ENCODE measurements at regions of chr11 and their contacts with region 1.

Region 1: DNA sequence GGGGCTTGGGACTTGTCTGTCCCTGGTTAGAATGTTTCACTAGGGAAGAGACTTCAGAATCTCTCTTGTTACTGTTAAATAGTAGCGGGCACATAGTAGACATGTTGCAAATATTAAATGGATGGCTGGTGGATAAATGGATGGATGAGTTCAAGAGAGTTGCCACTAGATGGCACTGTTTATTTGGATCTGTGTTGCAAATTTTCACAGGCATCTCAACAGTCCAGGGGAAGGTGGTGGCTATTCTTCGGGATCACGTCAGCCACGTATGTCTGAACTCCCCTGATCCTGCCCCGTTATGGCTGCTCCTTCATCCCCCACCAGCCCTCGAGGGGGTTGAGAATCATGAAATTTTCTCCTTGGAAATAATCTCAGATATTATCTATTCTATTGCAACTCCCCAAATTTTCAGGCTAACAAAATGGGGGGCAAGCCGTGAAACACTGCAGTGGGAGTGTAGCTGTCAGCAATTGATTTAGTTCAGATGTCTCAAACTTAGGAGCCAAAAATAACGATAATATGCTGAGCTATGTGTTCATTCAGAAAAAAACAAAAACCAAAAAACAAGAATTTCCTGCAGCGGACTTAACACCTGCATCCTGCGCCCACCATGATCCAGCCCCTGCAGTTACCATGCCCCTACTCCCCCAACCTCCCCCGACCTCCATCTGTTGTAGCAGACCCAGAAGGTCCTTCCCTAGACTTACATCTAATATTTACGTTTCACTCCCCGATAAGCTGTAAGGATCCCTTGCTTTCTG is 29.1 kb upstream of the BIRC3 start:
- DNase-seq: peak; percentile 76 to 82 (median 82)
- H3K4me3 ChIP-seq: peak overlapping the region in 6 of 7 experiments; percentile 7 to 79 (median 46)
- H3K27ac ChIP-seq: no peak overlapping the region
- H3K4me1 ChIP-seq: peaks cover 4 to 26% (median 14%) of the 10 kb centered on the region in 4 experiments
- H3K27me3 ChIP-seq: no peaks in the 10 kb centered on the region

Region 2: DNA sequence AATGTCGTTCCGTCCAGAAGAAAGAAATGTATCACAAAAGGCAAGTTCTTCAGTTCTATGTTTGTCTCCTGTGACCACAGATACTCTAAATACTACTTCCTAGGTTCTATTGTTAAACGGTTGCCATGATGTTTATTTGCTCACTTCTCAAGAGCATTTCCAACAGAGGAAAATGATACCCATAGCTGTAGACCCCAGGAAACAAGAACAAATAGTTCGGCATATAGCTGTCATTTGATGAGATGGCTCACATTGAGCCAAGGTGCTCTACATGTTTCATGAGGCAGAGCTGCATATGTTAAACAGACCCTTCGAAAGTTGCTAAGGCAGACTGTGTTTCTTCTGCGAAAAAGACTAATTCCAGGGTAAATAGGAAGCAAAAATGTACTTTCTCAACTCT is 356.5 kb before region 1 on chr11:
- CTCF ChIA-PET with region 1: no interaction called
- POLR2A ChIA-PET with region 1: no interaction called
- DNase-seq: no peak
- H3K4me3 ChIP-seq: no peak overlapping the region
- H3K27ac ChIP-seq: no peak overlapping the region
- H3K4me1 ChIP-seq: no peaks in the 10 kb centered on the region
- H3K27me3 ChIP-seq: no peaks in the 10 kb centered on the region

Region 3: DNA sequence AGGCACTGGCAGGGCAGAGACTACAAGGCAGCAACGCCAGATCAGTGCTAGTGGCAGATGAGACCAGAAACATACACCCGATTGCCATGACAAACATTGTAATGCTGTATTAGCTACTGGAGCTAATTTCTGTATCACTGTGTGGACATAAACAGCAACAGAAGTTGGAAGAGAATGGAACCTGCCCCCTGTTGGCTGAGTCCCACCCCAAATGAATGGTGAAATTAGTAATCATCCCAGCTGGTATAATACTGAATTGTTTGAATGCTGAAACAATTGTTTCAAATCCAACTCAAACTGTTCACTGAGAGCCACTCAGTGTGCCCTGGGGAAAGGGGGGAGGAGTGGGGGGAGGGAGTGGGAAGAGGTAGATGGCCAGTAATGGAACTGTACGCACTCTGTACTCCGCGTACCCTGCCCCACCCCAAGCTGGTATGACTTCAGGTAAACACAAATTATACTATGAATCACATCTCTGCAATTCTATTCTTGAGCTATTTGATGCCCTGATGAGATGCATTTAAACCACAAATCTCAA is 18.0 kb after region 1 on chr11:
- CTCF ChIA-PET with region 1: interaction called, 142 read pairs
- POLR2A ChIA-PET with region 1: no interaction called
- DNase-seq: no peak
- H3K4me3 ChIP-seq: no peak overlapping the region
- H3K27ac ChIP-seq: no peak overlapping the region
- H3K4me1 ChIP-seq: peaks cover 6 to 12% (median 9%) of the 10 kb centered on the region in 4 experiments
- H3K27me3 ChIP-seq: no peaks in the 10 kb centered on the region

Region 4: GRCh38 chr11:102317099-102317767 is 29.1 kb after region 1 on chr11 and contains the start of gene BIRC3:
- CTCF ChIA-PET with region 1: interaction called, 142 read pairs
- POLR2A ChIA-PET with region 1: interaction called, 3 read pairs
- DNase-seq: peak; percentile 99 to 100 (median 100)
- H3K4me3 ChIP-seq: peak within 1 kb of the TSS; percentile 52 to 88 (median 73)
- H3K27ac ChIP-seq: peak within 1 kb of the TSS; percentile 82 to 91
- H3K4me1 ChIP-seq: peaks cover 25 to 62% (median 41%) of the 10 kb centered on the region in 4 experiments
- H3K27me3 ChIP-seq: no peaks in the 10 kb centered on the region

Region 5: GRCh38 chr11:102346748-102347461 is 58.8 kb after region 1 on chr11 and contains the start of gene BIRC2:
- CTCF ChIA-PET with region 1: interaction called, 23 read pairs
- POLR2A ChIA-PET with region 1: interaction called, 9 read pairs
- DNase-seq: peak; percentile 95 to 98 (median 97)
- H3K4me3 ChIP-seq: peak within 1 kb of the TSS; percentile 84 to 98 (median 94)
- H3K27ac ChIP-seq: peak within 1 kb of the TSS; percentile 95 to 98
- H3K4me1 ChIP-seq: peaks cover 10 to 27% (median 25%) of the 10 kb centered on the region in 4 experiments
- H3K27me3 ChIP-seq: no peaks in the 10 kb centered on the region

Region 6: DNA sequence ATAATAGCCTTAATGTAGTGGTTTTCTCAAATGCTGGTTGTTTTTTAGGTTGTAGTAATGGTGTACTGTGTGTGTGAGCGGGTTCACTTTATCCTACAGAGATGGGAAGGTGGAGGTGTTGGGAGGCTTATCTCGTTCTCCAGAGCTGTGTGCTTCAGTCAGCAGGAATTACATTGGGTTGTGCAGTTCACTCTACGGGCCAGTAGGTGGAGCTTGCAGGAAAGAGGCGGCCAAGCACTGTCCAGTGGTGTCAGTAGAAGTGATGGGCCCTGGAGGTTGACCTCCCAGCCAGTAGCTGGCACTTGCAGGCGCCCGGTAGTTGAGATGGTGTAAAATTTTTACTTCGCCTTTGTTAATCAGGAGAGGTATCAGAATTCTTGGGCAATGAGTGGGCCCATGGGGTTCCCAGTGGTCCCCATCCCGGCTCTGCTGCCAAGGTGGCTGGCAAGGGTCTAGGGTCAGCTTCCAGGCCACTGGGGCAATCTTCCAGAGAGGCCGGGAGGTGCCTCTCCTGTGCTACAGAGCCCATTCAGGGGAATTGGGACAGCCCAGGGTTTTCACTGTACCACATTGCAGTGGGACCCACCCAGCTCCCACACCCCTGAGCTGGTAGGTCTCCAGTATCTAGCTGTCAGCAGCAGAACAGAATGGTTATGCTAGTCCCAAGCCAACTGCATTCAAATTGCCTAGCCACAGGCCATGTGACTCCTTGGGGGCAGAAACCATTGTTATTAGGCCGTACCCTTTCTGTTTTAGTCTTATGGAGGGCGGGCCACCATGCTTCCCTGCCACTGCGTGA is 102.7 kb after region 1 on chr11:
- CTCF ChIA-PET with region 1: interaction called, 11 read pairs
- POLR2A ChIA-PET with region 1: no interaction called
- DNase-seq: peak; percentile 44 to 61 (median 52)
- H3K4me3 ChIP-seq: no peak overlapping the region
- H3K27ac ChIP-seq: no peak overlapping the region
- H3K4me1 ChIP-seq: peaks cover 0 to 4% (median 3%) of the 10 kb centered on the region in 4 experiments
- H3K27me3 ChIP-seq: no peaks in the 10 kb centered on the region

Region 7: DNA sequence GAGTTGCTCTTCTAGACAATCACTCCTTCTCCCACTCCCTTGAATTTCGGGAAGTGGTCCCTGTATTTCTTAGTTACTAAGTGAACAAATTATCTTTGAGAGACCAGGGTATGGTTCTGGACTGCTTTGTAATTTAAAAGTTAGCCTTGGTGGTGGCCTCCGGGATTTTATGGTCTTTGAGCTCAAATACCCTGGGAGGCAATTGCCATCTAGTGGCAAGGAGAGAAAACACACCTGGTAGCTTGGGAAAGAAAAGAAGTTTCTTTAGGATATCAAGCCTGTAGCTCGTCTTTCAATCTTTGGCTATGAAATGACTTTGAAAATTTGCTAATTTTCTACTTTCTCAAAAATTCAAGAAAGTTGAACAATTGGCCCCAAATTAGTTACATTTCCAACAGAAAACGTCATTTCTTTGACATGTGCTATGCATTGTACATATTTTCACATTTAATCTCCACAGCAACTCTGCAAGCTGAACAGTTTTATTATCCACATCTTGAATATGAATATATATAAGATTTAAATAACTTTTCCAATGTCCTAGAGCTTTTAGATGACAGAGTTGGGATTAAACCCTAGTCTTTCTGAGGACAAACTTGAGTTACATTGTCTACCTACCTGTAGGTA is 378.3 kb after region 1 on chr11:
- CTCF ChIA-PET with region 1: interaction called, 11 read pairs
- POLR2A ChIA-PET with region 1: no interaction called
- DNase-seq: peak; percentile 41 to 56 (median 53)
- H3K4me3 ChIP-seq: no peak overlapping the region
- H3K27ac ChIP-seq: no peak overlapping the region
- H3K4me1 ChIP-seq: no peaks in the 10 kb centered on the region
- H3K27me3 ChIP-seq: no peaks in the 10 kb centered on the region

Measured in common myeloid progenitor, CD34-positive (primary cell).